Adrenal gland (tissue), 19 donors: ENCODE measurements at regions of chr2 and their contacts with region 1.

Region 1: GRCh38 chr2:65554765-65555591 is 122.6 kb upstream of the SPRED2 start:
- DNase-seq: no peak
- H3K4me3 ChIP-seq: no peak overlapping the region
- H3K27ac ChIP-seq: no peak overlapping the region
- H3K4me1 ChIP-seq: no peaks in the 10 kb centered on the region
- H3K27me3 ChIP-seq: no peaks in the 10 kb centered on the region
- CTCF ChIP-seq: no peak
- POLR2A ChIP-seq: no peak

Region 2: GRCh38 chr2:65264821-65265670 is 289.9 kb before region 1 on chr2:
- intact Hi-C with region 1: loop called (anchors 5 kb)
- DNase-seq: peak in 6 of 7 donors; percentile 35 to 58 (median 40)
- H3K4me3 ChIP-seq: no peak overlapping the region
- H3K27ac ChIP-seq: no peak overlapping the region
- H3K4me1 ChIP-seq: peaks cover 0 to 8% of the 10 kb centered on the region in 2 donors
- H3K27me3 ChIP-seq: no peaks in the 10 kb centered on the region
- CTCF ChIP-seq: peak; percentile 63 to 84 (median 74)
- POLR2A ChIP-seq: no peak

Region 3: GRCh38 chr2:65432227-65433190 is 122.5 kb before region 1 on chr2 and contains the start of gene SPRED2:
- intact Hi-C with region 1: loop called in 1 of 2 experiments (anchors 5 kb)
- DNase-seq: peak; percentile 92 to 97 (median 95)
- H3K4me3 ChIP-seq: peak within 1 kb of the TSS; percentile 58 to 97 (median 76)
- H3K27ac ChIP-seq: peak within 1 kb of the TSS; percentile 84 to 98 (median 93)
- H3K4me1 ChIP-seq: peaks cover 9 to 36% of the 10 kb centered on the region in 2 donors
- H3K27me3 ChIP-seq: no peaks in the 10 kb centered on the region
- CTCF ChIP-seq: peak in 2 of 6 experiments; percentile 19 to 36
- POLR2A ChIP-seq: peak; percentile 79 to 83
- total RNA-seq, gene SPRED2: 5.2 to 28.4 (median 16.4) TPM

Region 4: DNA sequence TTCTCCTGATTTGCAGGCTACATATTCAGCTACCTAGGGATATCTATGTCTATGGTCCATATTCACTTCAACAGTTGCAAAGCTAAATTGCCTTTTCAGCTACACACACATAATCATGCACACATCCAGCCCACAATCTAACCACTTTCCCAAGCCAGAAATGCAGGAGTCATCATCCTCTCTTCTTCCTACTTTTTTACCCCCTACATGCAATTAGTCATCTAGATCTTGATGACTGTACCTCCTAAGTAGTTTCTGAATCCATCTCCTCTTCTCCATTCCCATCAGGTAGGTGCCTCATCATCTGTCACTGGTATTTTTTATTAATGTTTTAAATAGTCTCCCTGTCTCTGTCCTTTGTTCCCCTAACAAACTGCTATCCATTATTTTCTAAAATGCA is 98.9 kb before region 1 on chr2:
- intact Hi-C with region 1: loop called in 1 of 2 experiments (anchors 10 kb)
- DNase-seq: no peak
- H3K4me3 ChIP-seq: no peak overlapping the region
- H3K27ac ChIP-seq: no peak overlapping the region
- H3K4me1 ChIP-seq: no peaks in the 10 kb centered on the region
- H3K27me3 ChIP-seq: no peaks in the 10 kb centered on the region
- CTCF ChIP-seq: no peak
- POLR2A ChIP-seq: no peak

Region 5: DNA sequence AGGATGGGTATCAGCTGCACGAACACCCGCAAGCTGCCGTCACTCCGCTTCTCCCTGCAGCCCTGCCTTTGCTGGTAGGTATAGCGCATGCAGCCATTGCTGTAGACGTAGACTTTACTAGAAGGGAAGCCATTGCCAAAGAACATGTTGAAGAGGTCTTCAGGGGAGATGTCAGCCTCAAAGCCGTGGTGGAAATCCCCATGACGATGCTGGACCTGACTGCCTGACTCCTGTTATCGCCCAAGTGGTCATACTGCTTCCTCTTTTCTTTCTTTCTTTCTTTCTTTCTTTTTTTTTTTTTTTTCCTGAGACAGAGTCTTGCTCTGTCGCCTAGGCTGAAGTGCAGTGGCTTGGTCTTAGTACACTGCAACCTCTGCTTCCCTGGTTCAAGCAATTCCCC is 53.9 kb before region 1 on chr2:
- intact Hi-C with region 1: no loop called
- DNase-seq: no peak
- H3K4me3 ChIP-seq: no peak overlapping the region
- H3K27ac ChIP-seq: no peak overlapping the region
- H3K4me1 ChIP-seq: no peaks in the 10 kb centered on the region
- H3K27me3 ChIP-seq: no peaks in the 10 kb centered on the region
- CTCF ChIP-seq: no peak
- POLR2A ChIP-seq: no peak